HepG2 (cell line): ENCODE measurements at regions of chrX and their contacts with region 1.

Region 1: DNA sequence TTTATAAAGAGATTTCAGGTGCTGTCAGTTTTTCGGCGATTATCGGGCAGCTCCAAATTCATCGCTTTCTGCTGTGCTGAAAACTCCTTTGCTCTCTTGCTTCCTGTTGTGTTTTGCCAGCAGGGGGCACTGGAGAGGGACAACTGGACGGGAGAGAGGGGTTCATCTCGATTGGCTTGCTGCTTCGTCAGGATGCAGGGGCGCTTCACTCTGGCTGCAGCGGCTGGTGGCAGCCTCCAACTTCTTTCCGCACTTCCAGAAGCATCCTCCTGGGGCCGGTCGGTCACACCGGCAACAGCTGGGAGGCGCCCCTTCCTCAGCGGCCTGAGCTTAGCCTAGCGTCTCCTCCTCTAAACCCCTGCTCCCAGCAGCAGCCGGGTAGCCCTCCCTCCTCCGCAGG is 29.5 kb downstream of the MSL3 start:
- DNase-seq: peak; percentile 43
- ATAC-seq: peak; percentile 93
- H3K4me3 ChIP-seq: no peak overlapping the region
- H3K27ac ChIP-seq: no peak overlapping the region
- H3K4me1 ChIP-seq: no peaks in the 10 kb centered on the region
- H3K27me3 ChIP-seq: no peaks in the 10 kb centered on the region
- CTCF ChIP-seq: peak; percentile 67
- EP300 ChIP-seq: no peak
- POLR2A ChIP-seq: no peak
- RAD21 ChIP-seq: no peak

Region 2: GRCh38 chrX:11611965-11612364 is 175.6 kb before region 1 on chrX:
- CTCF ChIA-PET with region 1: no interaction called
- POLR2A ChIA-PET with region 1: no interaction called
- in situ Hi-C with region 1: no loop called
- intact Hi-C with region 1: no loop called
- DNase-seq: no peak
- ATAC-seq: no peak
- H3K4me3 ChIP-seq: no peak overlapping the region
- H3K27ac ChIP-seq: no peak overlapping the region
- H3K4me1 ChIP-seq: no peaks in the 10 kb centered on the region
- H3K27me3 ChIP-seq: no peaks in the 10 kb centered on the region
- CTCF ChIP-seq: no peak
- EP300 ChIP-seq: no peak
- POLR2A ChIP-seq: no peak
- RAD21 ChIP-seq: no peak

Region 3: GRCh38 chrX:11908371-11908770 is 120.8 kb after region 1 on chrX:
- CTCF ChIA-PET with region 1: no interaction called
- POLR2A ChIA-PET with region 1: no interaction called
- in situ Hi-C with region 1: no loop called
- intact Hi-C with region 1: loop called (anchors 5 kb)
- DNase-seq: peak; percentile 2
- ATAC-seq: peak; percentile 76
- H3K4me3 ChIP-seq: no peak overlapping the region
- H3K27ac ChIP-seq: no peak overlapping the region
- H3K4me1 ChIP-seq: no peaks in the 10 kb centered on the region
- H3K27me3 ChIP-seq: no peaks in the 10 kb centered on the region
- CTCF ChIP-seq: peak; percentile 44
- EP300 ChIP-seq: no peak
- POLR2A ChIP-seq: no peak
- RAD21 ChIP-seq: no peak

Region 4: DNA sequence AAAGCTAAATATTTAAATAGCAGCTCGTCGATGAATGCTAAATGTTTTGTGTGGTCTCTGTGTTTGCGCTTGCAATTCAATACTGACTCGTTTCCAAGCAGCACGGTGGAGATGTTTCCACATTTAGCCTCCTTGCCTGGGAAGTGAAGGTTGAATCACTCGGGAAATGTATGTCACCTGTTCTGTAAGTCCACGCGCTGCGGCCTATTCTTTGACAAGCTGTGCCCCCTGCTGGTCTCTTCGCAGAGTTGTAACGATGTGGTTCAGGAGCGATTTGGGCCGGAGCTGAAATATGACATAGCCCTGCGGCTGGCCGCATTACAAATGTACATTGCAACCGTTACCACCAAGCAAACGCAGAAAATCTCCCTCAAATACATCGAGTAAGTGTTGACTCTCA is 914.1 kb after region 1 on chrX:
- CTCF ChIA-PET with region 1: no interaction called
- POLR2A ChIA-PET with region 1: no interaction called
- in situ Hi-C with region 1: no loop called
- intact Hi-C with region 1: loop called (anchors 2 kb)
- DNase-seq: peak; percentile 37
- ATAC-seq: peak; percentile 95
- H3K4me3 ChIP-seq: no peak overlapping the region
- H3K27ac ChIP-seq: no peak overlapping the region
- H3K4me1 ChIP-seq: no peaks in the 10 kb centered on the region
- H3K27me3 ChIP-seq: no peaks in the 10 kb centered on the region
- CTCF ChIP-seq: peak; percentile 75
- EP300 ChIP-seq: no peak
- POLR2A ChIP-seq: no peak
- RAD21 ChIP-seq: no peak